Transverse colon (tissue), 4 donors: ENCODE measurements at regions of chr17 and their contacts with region 1.

Region 1: GRCh38 chr17:31558748-31559644 is 167.5 kb downstream of the RAB11FIP4 start:
- DNase-seq: peak; percentile 81
- H3K4me3 ChIP-seq: peak overlapping the region; percentile 52 to 77 (median 63)
- H3K27ac ChIP-seq: peak overlapping the region; percentile 89 to 97 (median 91)
- H3K4me1 ChIP-seq: peaks cover 15 to 42% (median 32%) of the 10 kb centered on the region in 4 donors
- H3K27me3 ChIP-seq: no peaks in the 10 kb centered on the region
- CTCF ChIP-seq: peak; percentile 34 to 86 (median 73)
- EP300 ChIP-seq: no peak
- POLR2A ChIP-seq: peak; percentile 26

Region 2: DNA sequence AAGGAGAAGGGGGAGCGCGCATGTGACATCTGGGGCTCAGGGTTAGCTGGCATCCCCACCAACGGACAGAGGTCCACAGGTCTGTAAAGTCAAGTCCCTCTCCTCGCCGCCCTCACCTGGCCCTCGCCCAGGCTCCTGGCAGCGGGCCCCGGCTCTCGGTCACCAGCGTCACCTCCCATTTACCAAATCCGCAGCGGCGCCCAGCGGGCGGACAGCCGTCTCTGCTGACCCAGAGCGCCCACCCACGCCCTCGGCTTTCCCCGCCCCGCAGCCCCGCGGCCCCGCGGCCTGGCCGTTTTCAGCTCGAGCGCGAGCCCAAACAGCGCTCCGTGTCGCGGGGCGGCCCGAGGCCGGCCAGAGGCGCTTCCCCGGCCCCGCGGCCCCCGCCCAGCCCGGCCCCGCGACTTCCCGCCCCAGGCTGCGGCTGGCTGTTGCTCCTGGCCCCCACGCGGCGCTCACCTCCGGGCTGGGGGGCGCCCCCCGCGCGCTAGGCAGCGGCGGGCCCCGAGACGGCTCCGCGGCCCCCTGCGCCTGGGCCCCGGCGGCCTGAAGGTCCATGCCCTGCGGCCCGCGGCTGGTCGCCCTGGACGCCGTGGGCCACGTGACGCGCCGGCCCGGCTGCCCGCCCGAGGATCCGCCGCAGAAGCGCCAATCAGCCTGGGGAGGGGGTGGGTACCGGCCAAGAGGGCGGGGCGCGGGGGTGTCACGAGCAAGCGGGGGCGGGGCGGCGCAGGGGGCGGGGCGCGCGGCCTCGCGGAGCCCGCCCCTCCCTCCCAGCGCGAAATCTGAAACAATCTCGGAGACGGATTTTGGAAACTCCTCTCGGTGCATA is 299.9 kb after region 1 on chr17 and contains the start of gene COPRS:
- in situ Hi-C with region 1: no loop called
- intact Hi-C with region 1: loop called (anchors 5 kb)
- DNase-seq: peak; percentile 91
- H3K4me3 ChIP-seq: peak within 1 kb of the TSS; percentile 27 to 90 (median 78)
- H3K27ac ChIP-seq: peak within 1 kb of the TSS; percentile 80 to 92 (median 86)
- H3K4me1 ChIP-seq: peaks cover 6 to 24% (median 17%) of the 10 kb centered on the region in 4 donors
- H3K27me3 ChIP-seq: no peaks in the 10 kb centered on the region
- CTCF ChIP-seq: no peak
- EP300 ChIP-seq: no peak
- POLR2A ChIP-seq: no peak
- total RNA-seq, gene COPRS: 19.8 to 43.8 (median 38.2) TPM